HCT116 (cell line): ENCODE measurements at regions of chr10 and their contacts with region 1.

Region 1: DNA sequence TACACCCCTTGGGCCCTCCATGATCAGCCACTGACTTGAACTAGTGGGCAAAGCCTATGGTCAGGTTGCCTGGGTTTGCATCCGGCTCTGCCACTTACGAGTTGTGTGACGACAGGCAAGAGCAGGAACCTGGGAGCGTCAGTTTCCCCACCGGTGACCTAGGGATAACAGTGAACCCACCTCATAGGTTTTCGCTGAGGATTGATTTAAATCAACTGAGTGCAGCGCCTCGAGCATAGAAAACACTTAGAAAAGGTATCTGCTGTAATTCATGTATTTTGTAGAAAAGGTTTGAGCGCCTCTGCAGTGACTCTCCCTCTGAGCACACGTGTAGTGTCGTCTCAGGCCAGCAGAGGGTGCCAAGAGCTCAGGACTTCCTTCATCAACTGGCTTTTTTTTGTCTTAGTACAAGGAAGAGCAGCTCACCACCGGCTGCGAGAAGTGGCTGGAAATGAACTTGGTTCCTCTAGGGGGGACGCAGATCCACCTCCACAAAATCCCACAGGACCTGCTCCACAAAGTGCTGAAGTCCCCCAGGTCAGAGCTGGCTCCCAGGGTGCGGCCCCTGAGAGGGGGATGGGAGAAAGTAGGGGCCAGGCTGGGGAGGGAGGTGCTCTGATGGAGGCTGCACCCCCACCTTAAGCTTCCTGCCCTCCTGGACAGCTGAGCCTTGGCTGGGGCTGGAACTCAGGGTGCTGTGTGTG is 27.7 kb downstream of the BTBD16 start:
- DNase-seq: peak; percentile 73
- ATAC-seq: peak; percentile 95
- H3K4me3 ChIP-seq: peak overlapping the region; percentile 22 to 35
- H3K27ac ChIP-seq: no peak overlapping the region; the same call in 1 of the 2 replicates
- H3K4me1 ChIP-seq: peaks cover 0 to 18% of the 10 kb centered on the region in 2 experiments; a peak in 2 of 4 replicates
- H3K27me3 ChIP-seq: no peaks in the 10 kb centered on the region
- CTCF ChIP-seq: peak; percentile 94 to 99 (median 98)
- POLR2A ChIP-seq: no peak
- RAD21 ChIP-seq: peak; percentile 100

Region 2: DNA sequence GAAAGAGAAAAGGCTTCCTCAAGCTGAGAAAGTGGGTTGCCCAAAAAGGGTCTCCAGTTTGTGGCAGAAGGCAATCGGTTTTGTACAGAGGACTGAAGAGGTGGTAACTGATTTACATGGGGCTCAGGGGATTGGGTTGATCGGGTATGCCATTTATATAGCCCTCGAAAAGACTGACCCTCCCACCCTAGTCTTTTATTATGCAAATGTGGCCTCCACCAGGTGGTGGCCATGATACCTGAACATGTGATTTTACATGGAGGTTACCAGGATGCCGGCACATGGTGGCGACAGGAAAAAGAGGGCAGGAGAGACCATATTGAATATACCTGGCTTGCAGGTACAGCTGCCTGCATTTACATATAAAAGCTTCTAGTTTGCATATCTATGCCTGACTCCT is 407.6 kb before region 1 on chr10:
- CTCF ChIA-PET with region 1: no interaction called
- POLR2A ChIA-PET with region 1: no interaction called
- RAD21 ChIA-PET with region 1: no interaction called
- intact Hi-C with region 1: no loop called
- DNase-seq: no peak
- ATAC-seq: no peak
- H3K4me3 ChIP-seq: no peak overlapping the region
- H3K27ac ChIP-seq: no peak overlapping the region
- H3K4me1 ChIP-seq: no peaks in the 10 kb centered on the region
- H3K27me3 ChIP-seq: no peaks in the 10 kb centered on the region
- CTCF ChIP-seq: no peak
- POLR2A ChIP-seq: no peak
- RAD21 ChIP-seq: no peak

Region 3: DNA sequence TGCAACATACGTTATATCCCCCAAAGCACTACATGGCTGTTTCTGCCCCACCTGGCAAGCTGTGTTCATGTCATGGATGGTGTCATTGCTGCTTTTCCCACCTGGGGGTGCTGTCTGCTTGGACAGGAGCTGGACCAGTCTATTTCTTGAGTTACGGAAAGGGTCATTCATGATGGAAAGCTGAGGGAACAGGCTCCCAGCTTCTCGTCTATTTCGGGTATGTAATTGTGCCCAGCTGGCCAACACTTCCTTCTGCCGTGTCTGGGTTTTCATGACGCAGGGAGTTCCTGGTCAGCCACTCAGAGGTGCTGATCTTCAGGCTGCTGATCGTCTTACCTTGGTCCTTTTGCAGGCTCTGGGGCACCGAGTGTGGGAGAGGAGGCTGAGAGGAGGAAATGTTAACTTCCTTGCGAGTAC is 19.0 kb before region 1 on chr10:
- CTCF ChIA-PET with region 1: interaction called, 18 read pairs
- POLR2A ChIA-PET with region 1: interaction called, 4 read pairs
- RAD21 ChIA-PET with region 1: interaction called in 1 of 2 experiments, 5 read pairs
- intact Hi-C with region 1: no loop called
- DNase-seq: peak; percentile 70
- ATAC-seq: peak; percentile 87
- H3K4me3 ChIP-seq: no peak overlapping the region
- H3K27ac ChIP-seq: no peak overlapping the region
- H3K4me1 ChIP-seq: peaks cover 3 to 15% of the 10 kb centered on the region in 2 experiments; a peak in 3 of 4 replicates
- H3K27me3 ChIP-seq: no peaks in the 10 kb centered on the region
- CTCF ChIP-seq: peak; percentile 88 to 98 (median 97); a peak in 5 of 6 replicates
- POLR2A ChIP-seq: no peak
- RAD21 ChIP-seq: peak; percentile 98

Region 4: DNA sequence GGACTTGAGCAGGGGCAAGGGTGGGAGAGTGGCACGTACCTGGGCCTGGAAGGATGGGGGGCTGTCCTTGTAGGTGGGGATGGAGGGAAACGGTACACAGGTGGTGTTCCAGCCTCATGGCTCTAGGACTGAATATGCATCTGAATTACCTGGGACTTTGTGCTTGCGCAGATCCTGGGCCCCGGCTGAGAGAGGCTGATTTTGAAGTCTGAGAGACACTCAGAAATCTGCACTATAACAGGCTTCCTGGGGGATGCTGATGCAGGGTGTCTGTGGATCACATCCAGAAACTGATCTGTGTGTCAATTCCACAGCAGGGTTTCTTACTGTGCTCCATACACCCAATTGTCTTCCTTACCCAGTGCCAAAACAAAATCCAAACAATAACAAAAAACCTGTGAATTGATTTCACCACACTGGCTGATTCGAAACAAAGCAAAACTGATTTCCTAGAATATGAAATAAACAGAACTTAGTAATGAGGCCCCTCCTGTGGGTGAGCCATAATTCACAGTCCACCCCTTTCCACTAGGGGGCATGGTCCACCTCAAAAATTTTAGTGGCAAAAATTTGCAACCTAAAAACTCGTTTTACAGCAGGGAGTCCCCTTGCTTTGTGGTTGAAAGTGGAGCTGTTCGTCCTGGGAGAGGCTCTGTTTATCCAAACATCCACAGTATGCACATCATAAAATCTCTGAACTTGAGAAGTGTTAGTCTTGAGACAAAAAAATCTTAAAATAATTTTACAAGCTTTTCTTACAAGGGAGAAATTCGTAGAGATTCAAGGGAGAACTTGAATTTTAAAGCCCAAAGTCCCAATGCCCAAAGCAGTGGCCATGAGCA is 43.8 kb after region 1 on chr10:
- CTCF ChIA-PET with region 1: interaction called, 8 read pairs
- POLR2A ChIA-PET with region 1: no interaction called
- RAD21 ChIA-PET with region 1: interaction called in 1 of 2 experiments, 6 read pairs
- intact Hi-C with region 1: loop called (anchors 2 kb)
- DNase-seq: peak; percentile 39
- ATAC-seq: peak; percentile 73
- H3K4me3 ChIP-seq: no peak overlapping the region
- H3K27ac ChIP-seq: no peak overlapping the region
- H3K4me1 ChIP-seq: peaks cover 7 to 17% of the 10 kb centered on the region in 2 experiments
- H3K27me3 ChIP-seq: no peaks in the 10 kb centered on the region
- CTCF ChIP-seq: peak; percentile 90 to 98 (median 90)
- POLR2A ChIP-seq: no peak
- RAD21 ChIP-seq: peak; percentile 89

Region 5: GRCh38 chr10:122462533-122463465 is 164.0 kb after region 1 on chr10:
- CTCF ChIA-PET with region 1: no interaction called
- POLR2A ChIA-PET with region 1: no interaction called
- RAD21 ChIA-PET with region 1: no interaction called
- intact Hi-C with region 1: no loop called
- DNase-seq: no peak
- ATAC-seq: no peak
- H3K4me3 ChIP-seq: no peak overlapping the region
- H3K27ac ChIP-seq: no peak overlapping the region
- H3K4me1 ChIP-seq: no peaks in the 10 kb centered on the region
- H3K27me3 ChIP-seq: peaks cover 32% of the 10 kb centered on the region; the same call in 1 of the 2 replicates
- CTCF ChIP-seq: no peak
- POLR2A ChIP-seq: no peak
- RAD21 ChIP-seq: no peak

Region 6: DNA sequence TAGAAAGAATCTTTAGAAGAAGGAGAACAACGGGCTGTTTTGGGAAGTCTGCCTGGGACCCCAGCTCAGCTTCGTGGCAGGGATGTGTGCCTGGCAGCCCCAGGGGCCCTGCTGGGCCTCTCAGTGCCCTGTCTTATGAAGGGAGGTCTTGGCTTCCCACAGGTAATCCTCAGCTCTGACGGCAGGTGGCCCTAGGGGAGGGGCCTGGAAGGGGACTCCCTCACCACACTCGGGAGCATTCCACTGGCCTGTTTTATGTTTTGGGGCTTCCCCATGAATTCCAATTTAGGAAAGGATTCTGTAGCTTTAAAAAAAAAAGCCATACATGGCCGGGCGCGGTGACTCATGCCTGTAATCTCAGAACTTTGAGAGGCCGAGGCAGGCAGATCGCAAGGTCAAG is 258.8 kb after region 1 on chr10:
- CTCF ChIA-PET with region 1: interaction called, 15 read pairs
- POLR2A ChIA-PET with region 1: no interaction called
- RAD21 ChIA-PET with region 1: no interaction called
- intact Hi-C with region 1: no loop called
- DNase-seq: peak; percentile 31
- ATAC-seq: peak; percentile 96
- H3K4me3 ChIP-seq: no peak overlapping the region
- H3K27ac ChIP-seq: no peak overlapping the region
- H3K4me1 ChIP-seq: peaks cover 0 to 8% of the 10 kb centered on the region in 2 experiments; a peak in 1 of 4 replicates
- H3K27me3 ChIP-seq: peaks cover 33% of the 10 kb centered on the region
- CTCF ChIP-seq: peak; percentile 4 to 46 (median 28); a peak in 2 of 6 replicates
- POLR2A ChIP-seq: no peak
- RAD21 ChIP-seq: no peak